Activated CD4-positive, alpha-beta T cell treated with anti-CD3 and anti-CD28 coated beads for 36 hours (primary cell): ENCODE measurements at regions of chr10 and their contacts with region 1.

Region 1: GRCh38 chr10:47047671-47048525 is 136.7 kb downstream of the PTPN20 start:
- DNase-seq: peak; percentile 90
- ATAC-seq: peak; percentile 86
- H3K4me3 Mint-ChIP-seq: no peak overlapping the region
- H3K27ac Mint-ChIP-seq: no peak overlapping the region
- H3K4me1 Mint-ChIP-seq: peaks cover 14% of the 10 kb centered on the region
- H3K27me3 Mint-ChIP-seq: no peaks in the 10 kb centered on the region

Region 2: DNA sequence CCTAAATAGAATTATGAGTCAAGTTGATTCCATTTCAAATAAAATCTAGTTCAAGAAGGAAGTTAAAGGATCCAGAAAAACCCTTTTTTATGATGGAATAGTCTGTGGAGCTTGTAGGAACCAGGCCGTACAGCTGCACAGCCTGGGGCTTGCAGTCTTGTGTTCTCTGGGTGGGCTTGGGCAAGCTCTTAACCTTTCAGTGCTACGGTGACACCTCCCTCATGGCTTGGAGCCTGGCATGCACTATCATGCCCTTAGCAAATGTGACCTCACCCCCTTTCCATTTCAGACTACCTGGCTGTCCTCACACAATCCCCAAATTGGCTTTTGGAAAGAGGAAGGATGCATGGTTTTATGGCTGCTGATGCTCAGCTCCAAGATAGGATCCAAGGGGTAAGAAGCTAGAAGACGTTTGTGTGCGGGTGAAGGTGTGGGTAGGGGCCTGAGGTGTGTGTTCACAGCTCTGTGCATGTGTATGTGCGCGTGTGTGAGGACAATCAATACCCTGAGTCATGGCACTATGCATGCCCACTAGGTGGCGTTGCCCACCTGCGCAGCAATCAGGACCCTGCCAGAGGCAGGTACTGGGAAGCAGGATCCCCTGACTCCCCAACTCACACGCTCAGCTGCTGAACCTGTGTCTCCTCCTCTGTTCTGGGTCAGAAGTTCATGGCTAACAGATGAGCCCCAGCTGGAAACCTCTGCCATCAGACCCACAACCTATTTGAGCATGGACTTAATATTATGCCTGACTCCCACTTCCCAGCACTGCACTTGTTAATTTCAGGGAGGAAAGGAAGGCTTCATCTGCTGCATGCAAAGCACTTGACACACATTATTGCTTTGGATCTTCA is 23.3 kb before region 1 on chr10:
- CTCF ChIA-PET with region 1: interaction called, 30 read pairs
- POLR2A ChIA-PET with region 1: no interaction called
- intact Hi-C with region 1: loop called in 1 of 2 experiments (anchors 1 kb)
- DNase-seq: peak; percentile 84
- ATAC-seq: peak; percentile 97
- H3K4me3 Mint-ChIP-seq: no peak overlapping the region
- H3K27ac Mint-ChIP-seq: no peak overlapping the region
- H3K4me1 Mint-ChIP-seq: peaks cover 5% of the 10 kb centered on the region
- H3K27me3 Mint-ChIP-seq: peaks cover 6% of the 10 kb centered on the region

Region 3: DNA sequence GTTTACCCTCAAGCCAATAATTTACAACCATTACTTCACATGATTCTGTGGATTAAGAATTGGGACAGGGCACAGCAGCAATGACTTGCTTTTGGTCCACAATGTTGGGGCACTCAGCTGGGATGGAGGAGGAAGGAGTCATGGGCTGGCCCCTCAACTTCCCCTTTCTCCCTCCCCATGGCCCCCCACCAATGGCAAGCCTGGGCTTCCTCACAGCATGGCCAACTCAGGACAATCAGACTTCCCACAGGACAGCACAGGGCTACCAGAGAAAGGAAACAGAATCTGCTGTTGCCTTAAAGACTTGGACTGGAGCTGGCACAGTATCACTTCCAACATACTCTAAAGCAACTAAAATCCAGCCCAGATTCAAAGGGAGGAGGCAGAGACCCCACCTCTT is 24.0 kb after region 1 on chr10:
- CTCF ChIA-PET with region 1: interaction called, 12 read pairs
- POLR2A ChIA-PET with region 1: no interaction called
- intact Hi-C with region 1: no loop called
- DNase-seq: no peak
- ATAC-seq: no peak
- H3K4me3 Mint-ChIP-seq: no peak overlapping the region
- H3K27ac Mint-ChIP-seq: no peak overlapping the region
- H3K4me1 Mint-ChIP-seq: peaks cover 2% of the 10 kb centered on the region
- H3K27me3 Mint-ChIP-seq: peaks cover 2% of the 10 kb centered on the region

Region 4: DNA sequence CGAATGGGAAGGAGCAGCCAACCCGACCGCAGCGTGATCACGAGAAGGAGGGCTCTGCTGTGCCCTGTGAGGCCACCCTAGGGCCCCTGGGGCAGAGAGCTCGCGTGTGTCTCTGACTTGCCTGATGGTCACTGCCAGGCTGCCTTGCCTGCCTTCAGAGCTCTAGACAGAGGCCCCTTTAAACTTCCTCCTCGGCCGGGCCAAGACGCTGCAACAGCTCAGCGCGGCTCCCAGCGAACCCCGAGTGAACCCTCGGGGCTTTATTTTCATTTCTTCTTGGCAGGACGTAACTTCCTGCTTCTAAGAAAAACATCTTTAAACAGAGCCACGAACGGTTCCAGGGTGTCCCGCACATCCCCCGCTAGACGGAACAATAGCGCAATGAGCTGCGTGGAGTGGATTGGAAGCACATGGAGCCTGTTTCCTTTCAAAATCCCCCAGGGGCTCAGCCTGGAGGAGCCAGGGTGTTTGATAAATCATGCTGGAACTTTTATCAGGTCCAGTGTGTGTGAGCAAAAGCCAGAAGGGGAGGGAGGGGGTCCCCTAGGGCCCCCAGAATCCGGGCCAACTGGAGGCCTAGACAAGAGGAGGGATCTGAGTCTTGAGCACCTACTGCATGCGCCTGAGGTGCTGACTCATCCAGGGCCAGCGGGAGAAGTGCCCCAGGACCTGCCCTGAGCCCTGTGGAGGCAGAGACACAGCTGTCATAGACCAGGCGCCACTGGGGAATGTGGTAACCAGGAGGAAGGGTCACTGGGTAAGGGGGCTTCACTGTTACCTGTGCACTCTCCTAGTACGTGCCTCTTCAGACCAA is 118.0 kb after region 1 on chr10:
- CTCF ChIA-PET with region 1: interaction called, 6 read pairs
- POLR2A ChIA-PET with region 1: no interaction called
- intact Hi-C with region 1: loop called in 1 of 2 experiments (anchors 5 kb)
- DNase-seq: peak; percentile 55
- ATAC-seq: peak; percentile 65
- H3K4me3 Mint-ChIP-seq: peak overlapping the region; percentile 62
- H3K27ac Mint-ChIP-seq: peak overlapping the region; percentile 87
- H3K4me1 Mint-ChIP-seq: peaks cover 33% of the 10 kb centered on the region
- H3K27me3 Mint-ChIP-seq: peaks cover under 1% of the 10 kb centered on the region

Region 5: DNA sequence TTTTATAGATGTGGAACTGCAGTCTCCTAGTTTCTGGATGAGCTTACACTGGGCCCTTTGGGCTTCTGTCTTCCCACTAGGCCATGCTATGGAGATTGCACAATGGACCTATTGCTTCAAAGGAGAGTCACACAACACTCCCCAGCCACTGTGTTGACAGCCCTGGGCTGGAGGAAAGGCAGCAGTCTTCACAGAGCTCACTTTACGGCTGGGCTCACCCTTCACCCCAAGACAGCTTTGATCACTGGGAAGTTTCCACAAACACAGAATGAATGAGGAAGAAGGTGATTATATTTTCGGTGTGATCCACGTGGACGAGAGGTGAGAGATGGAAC is 159.3 kb after region 1 on chr10:
- CTCF ChIA-PET with region 1: interaction called, 10 read pairs
- POLR2A ChIA-PET with region 1: no interaction called
- intact Hi-C with region 1: no loop called
- DNase-seq: peak; percentile 31
- ATAC-seq: peak; percentile 67
- H3K4me3 Mint-ChIP-seq: peak overlapping the region; percentile 38
- H3K27ac Mint-ChIP-seq: peak overlapping the region; percentile 79
- H3K4me1 Mint-ChIP-seq: peaks cover 57% of the 10 kb centered on the region
- H3K27me3 Mint-ChIP-seq: no peaks in the 10 kb centered on the region

Region 6: GRCh38 chr10:47340608-47341170 is 292.8 kb after region 1 on chr10:
- CTCF ChIA-PET with region 1: interaction called, 28 read pairs
- POLR2A ChIA-PET with region 1: no interaction called
- intact Hi-C with region 1: loop called in 1 of 2 experiments (anchors 1 kb)
- DNase-seq: peak; percentile 84
- ATAC-seq: peak; percentile 55
- H3K4me3 Mint-ChIP-seq: no peak overlapping the region
- H3K27ac Mint-ChIP-seq: no peak overlapping the region
- H3K4me1 Mint-ChIP-seq: no peaks in the 10 kb centered on the region
- H3K27me3 Mint-ChIP-seq: peaks cover 4% of the 10 kb centered on the region